ENCODE measurements at regions of chr12 and their contacts with region 1.

Region 1: GRCh38 chr12:45388545-45388944 is 172.7 kb downstream of the ANO6 start:
- DNase-seq: peak; percentile 30
- H3K4me3 ChIP-seq: no peak overlapping the region
- H3K27ac ChIP-seq: no peak overlapping the region
- H3K27me3 ChIP-seq: no peaks in the 10 kb centered on the region
- CTCF ChIP-seq: peak; percentile 90

Region 2: DNA sequence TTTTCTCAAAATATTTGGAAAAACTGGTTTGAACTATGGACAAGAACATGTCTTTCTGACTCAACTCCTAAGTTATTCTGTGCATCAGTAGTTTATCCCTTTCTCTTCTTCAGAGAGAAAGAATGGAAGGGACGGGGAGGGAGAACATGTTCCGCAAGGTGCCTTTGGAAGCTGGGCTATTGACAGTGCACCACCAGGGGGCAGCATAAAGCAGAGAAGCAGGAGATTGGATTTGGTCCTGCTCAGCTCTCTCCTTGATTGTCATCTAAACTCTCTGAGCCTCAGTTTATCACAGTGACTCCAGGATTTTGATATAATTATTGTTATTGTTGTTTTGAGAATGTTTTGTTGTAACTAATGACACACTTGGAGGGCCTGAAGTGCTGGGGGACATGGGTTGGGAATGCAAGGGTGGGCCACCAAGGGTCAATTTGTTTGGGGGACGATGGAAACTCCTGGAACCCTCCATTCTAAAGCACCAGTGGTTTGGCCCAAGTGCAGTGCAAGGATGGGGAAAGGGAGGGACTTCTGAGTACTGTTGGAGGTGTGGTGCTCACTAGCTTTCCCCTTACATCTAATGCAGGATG is 218.0 kb before region 1 on chr12:
- CTCF ChIA-PET with region 1: interaction called, 55 read pairs
- POLR2A ChIA-PET with region 1: interaction called, 3 read pairs
- DNase-seq: peak; percentile 53
- H3K4me3 ChIP-seq: no peak overlapping the region
- H3K27ac ChIP-seq: no peak overlapping the region
- H3K27me3 ChIP-seq: no peaks in the 10 kb centered on the region
- CTCF ChIP-seq: peak; percentile 96

Region 3: GRCh38 chr12:45191239-45191638 is 197.3 kb before region 1 on chr12:
- CTCF ChIA-PET with region 1: interaction called, 15 read pairs
- POLR2A ChIA-PET with region 1: no interaction called
- DNase-seq: no peak
- H3K4me3 ChIP-seq: no peak overlapping the region
- H3K27ac ChIP-seq: no peak overlapping the region
- H3K27me3 ChIP-seq: no peaks in the 10 kb centered on the region
- CTCF ChIP-seq: no peak

Region 4: DNA sequence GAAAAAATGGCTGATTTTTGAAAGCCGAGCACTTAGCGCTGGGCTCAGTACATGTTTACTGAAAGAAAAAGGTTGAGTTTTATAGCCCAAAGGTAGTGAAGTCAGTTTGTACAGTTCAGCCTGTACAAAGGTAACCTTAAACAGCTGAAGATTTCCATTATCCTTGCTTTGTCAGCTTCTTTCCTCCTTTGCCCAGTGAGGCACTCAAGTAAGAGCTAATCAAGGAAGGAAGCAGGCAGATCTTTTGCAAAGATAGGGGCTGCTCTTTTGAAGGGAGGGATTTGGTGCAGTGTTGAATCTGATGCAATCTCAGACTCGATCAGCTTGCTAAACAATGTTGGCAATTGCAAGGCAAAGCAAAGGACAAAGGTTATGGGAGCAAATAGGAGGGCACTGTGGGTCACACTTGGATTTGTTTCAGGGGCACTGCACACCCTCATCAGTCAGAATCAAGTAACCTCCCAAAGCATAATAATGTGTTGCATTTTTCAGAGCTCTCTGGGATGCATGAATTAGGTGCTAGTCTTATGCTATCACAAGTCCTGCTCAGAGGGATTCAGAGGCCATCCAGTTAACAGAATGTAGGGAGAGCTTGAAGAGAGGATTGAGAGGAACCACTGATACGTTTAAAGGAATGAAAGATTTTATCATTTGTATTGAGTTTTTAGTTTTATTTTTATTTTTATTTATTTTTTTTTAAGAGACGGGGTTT is 128.3 kb before region 1 on chr12:
- CTCF ChIA-PET with region 1: no interaction called
- POLR2A ChIA-PET with region 1: no interaction called
- DNase-seq: no peak
- H3K4me3 ChIP-seq: no peak overlapping the region
- H3K27ac ChIP-seq: peak overlapping the region; percentile 76
- H3K27me3 ChIP-seq: no peaks in the 10 kb centered on the region
- CTCF ChIP-seq: no peak

Region 5: DNA sequence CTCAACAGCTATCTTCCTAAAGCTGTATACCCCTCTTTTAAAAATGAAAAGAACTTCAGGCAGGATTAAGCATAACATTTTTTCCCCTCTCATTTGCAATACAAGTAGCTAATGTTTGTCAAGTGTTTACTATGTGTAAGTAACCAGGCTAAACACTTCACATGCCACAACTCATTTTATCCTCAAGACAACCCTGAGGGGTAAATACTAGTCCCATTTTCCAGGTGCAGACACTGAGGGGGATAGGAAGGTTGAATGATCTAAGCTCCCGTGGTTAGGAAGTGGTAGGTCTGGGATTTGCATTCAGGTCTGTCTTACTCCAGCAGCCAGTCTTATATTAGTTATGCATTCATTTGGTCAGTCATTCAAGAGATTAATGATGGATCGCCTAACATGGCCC is 101.9 kb before region 1 on chr12:
- CTCF ChIA-PET with region 1: interaction called, 13 read pairs
- POLR2A ChIA-PET with region 1: interaction called, 3 read pairs
- DNase-seq: no peak
- H3K4me3 ChIP-seq: no peak overlapping the region
- H3K27ac ChIP-seq: no peak overlapping the region
- H3K27me3 ChIP-seq: no peaks in the 10 kb centered on the region
- CTCF ChIP-seq: no peak

Region 6: GRCh38 chr12:45302621-45303369 is 85.8 kb before region 1 on chr12:
- CTCF ChIA-PET with region 1: no interaction called
- POLR2A ChIA-PET with region 1: no interaction called
- DNase-seq: no peak
- H3K4me3 ChIP-seq: no peak overlapping the region
- H3K27ac ChIP-seq: no peak overlapping the region
- H3K27me3 ChIP-seq: no peaks in the 10 kb centered on the region
- CTCF ChIP-seq: no peak

Region 7: GRCh38 chr12:45349911-45350310 is 38.6 kb before region 1 on chr12:
- CTCF ChIA-PET with region 1: interaction called, 14 read pairs
- POLR2A ChIA-PET with region 1: no interaction called
- DNase-seq: no peak
- H3K4me3 ChIP-seq: no peak overlapping the region
- H3K27ac ChIP-seq: no peak overlapping the region
- H3K27me3 ChIP-seq: no peaks in the 10 kb centered on the region
- CTCF ChIP-seq: no peak

Region 8: DNA sequence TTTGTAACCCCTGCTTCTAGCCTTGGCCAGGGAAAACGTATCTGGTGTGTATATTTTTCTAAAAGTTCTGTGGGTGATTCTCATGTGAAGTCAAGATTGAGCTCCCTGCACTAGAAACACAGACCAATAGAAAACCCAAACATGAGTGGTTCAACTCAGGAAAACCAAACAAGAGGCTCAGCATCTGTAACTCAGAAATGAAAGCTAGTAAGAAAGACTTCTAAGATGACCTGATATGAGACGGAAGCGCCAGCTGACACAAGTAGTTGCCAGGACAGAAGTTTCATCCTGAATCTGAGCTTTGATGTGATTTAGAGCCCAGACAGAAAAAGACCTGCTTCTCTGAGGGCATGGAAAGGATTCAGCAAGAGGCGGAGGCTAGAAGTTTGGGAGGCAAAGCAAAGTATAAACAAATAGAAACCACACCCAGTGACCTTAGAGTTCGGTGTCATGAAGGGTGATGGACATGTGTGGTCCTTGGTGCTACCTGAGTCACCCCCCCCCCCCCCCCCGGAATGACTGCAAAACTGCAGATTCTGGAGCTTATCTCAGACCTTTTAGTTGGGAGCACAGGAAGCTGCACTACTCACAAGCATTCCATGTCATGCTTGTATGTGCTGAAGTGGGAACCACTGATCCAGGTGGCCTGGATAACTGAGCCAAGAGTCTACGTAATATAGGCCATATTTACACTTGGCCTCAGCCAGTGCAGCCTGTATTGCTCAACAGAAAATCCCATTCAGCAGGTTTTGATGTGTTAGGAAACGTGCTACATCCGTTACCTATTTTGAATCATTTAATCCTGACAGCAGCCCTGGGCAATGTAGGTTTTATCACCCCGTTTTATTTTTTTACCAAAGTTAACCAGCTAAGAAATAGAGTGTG is 18.7 kb after region 1 on chr12:
- CTCF ChIA-PET with region 1: interaction called, 15 read pairs
- POLR2A ChIA-PET with region 1: no interaction called
- DNase-seq: peak; percentile 49
- H3K4me3 ChIP-seq: no peak overlapping the region
- H3K27ac ChIP-seq: peak overlapping the region; percentile 71
- H3K27me3 ChIP-seq: no peaks in the 10 kb centered on the region
- CTCF ChIP-seq: no peak

Region 9: DNA sequence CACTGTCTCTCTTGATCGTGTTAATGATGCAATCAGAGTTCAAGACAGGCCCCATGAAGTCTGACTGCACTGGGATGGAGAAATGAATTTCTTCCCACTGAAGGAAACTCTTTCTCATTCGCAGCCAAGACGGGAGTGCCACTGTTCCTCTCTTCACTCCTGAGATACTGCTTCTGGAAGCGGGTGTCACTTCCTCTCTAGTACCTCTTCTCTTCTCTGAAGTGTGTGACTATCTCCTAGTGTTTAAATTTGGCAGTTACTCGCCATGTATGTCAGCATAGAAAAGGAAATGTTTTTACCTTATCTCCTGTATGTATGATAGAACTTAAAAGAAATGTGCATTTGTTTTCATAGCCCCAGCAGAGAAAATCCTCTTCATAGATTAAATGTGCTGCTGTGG is 42.6 kb after region 1 on chr12:
- CTCF ChIA-PET with region 1: no interaction called
- POLR2A ChIA-PET with region 1: no interaction called
- DNase-seq: no peak
- H3K4me3 ChIP-seq: no peak overlapping the region
- H3K27ac ChIP-seq: no peak overlapping the region
- H3K27me3 ChIP-seq: no peaks in the 10 kb centered on the region
- CTCF ChIP-seq: no peak

Measured in AG04450 (cell line).